Aorta (tissue), 5 donors: ENCODE measurements at regions of chr12 and their contacts with region 1.

Region 1: DNA sequence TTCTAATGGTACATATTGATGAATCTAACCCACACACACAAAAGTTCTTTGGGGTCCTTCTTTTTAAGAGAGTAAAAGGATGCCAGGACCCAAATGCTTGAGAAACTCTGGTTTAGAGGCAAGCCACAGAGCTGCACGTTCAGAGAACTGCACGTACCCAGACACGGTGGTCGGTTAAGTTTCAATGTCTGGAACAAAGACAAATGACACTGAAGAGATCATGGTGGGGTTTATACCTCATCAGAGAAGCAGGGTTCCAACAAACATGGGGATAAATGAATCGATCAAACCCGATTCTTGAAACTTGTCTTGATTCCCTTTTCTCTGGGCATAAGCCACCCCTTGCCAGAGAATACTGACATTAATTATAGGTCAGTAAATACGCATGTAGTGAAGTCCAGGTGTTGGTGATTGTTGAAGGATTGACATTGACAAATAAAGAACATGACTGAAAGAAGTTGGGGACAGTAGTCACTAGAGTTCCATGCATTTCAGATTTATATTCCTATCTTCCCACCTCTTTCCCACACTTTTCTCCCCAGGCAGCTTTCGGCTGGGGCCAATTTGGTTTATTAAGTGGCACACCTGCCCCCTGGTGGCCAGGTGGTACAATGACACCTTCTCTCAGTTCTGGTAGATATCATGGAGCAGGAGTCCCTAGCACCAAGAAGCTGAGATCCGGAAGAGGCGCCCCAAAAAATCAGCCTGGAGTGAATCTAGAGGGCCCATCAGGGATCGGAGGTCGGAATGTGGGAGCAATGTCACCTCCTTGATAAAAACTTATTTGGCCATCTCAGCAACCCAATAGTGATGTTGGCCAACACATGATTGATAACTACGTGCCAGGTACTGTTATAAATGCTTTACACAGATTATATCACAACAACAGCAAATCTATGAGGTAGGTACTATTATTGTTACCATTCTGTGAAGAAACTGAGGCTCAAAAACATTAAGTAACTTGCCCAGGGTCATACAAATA is 17.8 kb upstream of the HDAC7 start:
- DNase-seq: peak; percentile 73 to 90
- ATAC-seq: peak; percentile 82
- H3K4me3 ChIP-seq: no peak overlapping the region
- H3K27ac ChIP-seq: no peak overlapping the region
- H3K4me1 ChIP-seq: no peaks in the 10 kb centered on the region
- H3K27me3 ChIP-seq: no peaks in the 10 kb centered on the region

Region 2: DNA sequence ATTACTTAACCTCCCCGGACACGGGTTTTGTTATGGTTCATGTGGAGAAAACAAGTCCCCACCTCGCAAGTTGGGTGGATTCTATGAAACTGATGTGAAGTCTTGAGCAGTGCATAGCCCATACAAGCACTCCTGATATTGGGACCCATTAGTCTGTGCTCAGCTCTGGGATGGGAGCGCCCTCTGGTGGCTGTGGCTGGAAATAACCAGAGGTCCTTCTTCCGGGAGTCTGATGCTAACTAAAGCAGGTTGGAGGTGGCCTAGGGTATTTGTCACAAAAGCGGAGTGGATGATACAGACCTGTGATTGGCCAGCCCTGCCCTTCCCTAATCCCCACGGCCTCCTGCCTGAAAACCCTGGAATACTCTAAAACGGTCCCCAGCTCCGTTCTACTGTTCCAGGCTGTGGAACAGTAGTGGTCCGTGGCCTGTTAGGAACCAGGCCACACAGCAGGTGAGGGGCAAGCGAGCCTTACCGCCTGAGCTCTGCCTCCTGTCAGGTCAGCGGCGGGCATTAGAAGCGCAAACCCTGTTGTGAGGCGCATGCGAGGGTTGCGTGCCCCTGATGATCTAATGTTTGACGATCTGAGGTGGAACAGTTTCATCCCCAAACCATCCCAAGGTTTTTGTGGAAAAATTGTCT is 58.1 kb before region 1 on chr12:
- intact Hi-C with region 1: loop called (anchors 2 to 5 kb)
- DNase-seq: peak; percentile 92 to 97
- ATAC-seq: peak; percentile 88
- H3K4me3 ChIP-seq: no peak overlapping the region
- H3K27ac ChIP-seq: no peak overlapping the region
- H3K4me1 ChIP-seq: peaks cover 0 to 5% of the 10 kb centered on the region in 2 donors
- H3K27me3 ChIP-seq: no peaks in the 10 kb centered on the region

Region 3: DNA sequence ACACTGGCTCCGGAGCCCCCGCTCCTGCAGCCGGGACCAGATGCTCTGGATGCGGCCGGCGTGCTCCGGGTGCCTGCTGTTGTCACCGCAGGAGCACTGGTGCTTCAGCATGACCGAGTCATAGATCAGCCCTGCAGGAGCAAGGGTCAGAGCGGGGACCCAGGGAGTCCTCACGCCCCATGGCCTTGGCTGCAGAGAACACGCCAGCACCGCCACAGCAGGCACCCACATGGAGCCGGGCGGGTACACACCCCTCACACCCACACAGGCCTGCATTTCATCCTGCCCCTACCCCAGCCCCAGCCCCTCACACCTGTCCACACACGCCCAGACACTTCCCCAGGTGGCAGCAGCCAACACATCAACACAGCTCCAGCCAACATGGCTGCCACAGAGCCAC is 45.6 kb before region 1 on chr12:
- intact Hi-C with region 1: no loop called
- DNase-seq: no peak
- ATAC-seq: no peak
- H3K4me3 ChIP-seq: no peak overlapping the region
- H3K27ac ChIP-seq: no peak overlapping the region
- H3K4me1 ChIP-seq: no peaks in the 10 kb centered on the region
- H3K27me3 ChIP-seq: no peaks in the 10 kb centered on the region

Region 4: DNA sequence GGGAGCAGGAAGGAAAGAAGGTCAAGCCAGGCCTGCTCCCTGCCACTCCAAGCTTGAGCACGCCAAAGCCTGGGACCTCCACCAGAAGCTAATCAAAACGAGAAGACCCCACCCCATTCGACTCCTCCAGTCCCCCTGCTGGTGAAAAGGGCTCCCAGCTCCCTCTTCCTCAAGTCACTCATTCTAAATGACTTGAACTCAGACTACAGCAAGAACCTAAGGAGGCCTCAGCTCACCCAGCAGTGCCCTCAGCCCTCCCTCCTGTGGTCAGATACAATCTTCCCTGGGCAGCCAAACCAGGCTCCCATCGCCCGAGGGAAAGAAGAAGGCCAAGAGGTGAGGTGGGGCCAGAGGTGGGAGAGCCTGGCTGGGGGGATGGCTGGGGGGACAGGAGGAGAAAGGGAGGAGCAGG is 35.2 kb before region 1 on chr12:
- intact Hi-C with region 1: loop called (anchors 2 to 5 kb)
- DNase-seq: no peak
- ATAC-seq: no peak
- H3K4me3 ChIP-seq: no peak overlapping the region
- H3K27ac ChIP-seq: peak overlapping the region in 1 of 2 donors; percentile 15
- H3K4me1 ChIP-seq: peaks cover 3 to 7% of the 10 kb centered on the region in 2 donors
- H3K27me3 ChIP-seq: no peaks in the 10 kb centered on the region

Region 5: GRCh38 chr12:47807338-47807737 is 30.1 kb before region 1 on chr12:
- intact Hi-C with region 1: loop called (anchors 2 to 5 kb)
- DNase-seq: no peak
- ATAC-seq: no peak
- H3K4me3 ChIP-seq: no peak overlapping the region
- H3K27ac ChIP-seq: no peak overlapping the region
- H3K4me1 ChIP-seq: peaks cover 7 to 15% of the 10 kb centered on the region in 2 donors
- H3K27me3 ChIP-seq: no peaks in the 10 kb centered on the region